ENCODE measurements at regions of chr7 and their contacts with region 1.

Region 1: DNA sequence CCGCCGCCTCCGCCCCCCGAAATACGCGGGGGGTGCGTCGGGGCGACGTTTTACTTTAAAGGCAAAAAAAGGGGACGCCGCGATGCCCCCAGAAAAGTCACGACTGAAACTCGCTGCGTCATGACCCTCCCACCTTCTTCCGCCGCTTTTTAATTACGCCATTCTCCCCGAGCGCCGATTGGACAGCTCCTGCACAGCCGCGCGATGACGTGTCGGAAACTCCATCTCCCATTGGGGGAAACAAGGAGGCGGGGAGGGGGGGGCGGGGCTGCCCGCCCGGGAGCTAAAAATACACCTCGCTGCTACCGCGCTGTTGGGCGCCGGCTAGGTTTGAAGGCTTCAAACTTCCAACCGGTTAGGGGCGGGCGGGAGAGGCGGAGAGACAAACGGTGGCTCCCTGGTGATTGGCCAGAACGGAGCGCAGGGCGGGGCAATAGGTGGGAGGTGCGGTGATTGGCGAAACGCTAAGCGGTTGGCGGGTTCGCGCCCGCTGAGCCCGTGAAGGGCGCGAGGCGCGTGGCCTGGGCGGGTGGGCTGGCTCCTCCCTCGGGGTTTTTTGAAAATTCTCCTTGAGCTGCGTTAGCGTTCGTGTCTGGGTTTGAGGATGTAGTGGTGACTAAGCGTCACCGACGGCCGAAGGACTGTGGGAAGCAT is at the start of gene RHEB:
- DNase-seq: peak; percentile 99
- ATAC-seq: peak; percentile 79 to 82
- H3K4me3 ChIP-seq: peak within 1 kb of the TSS; percentile 67 to 81 (median 72)
- H3K27ac ChIP-seq: peak within 1 kb of the TSS; percentile 85 to 98 (median 89)
- H3K4me1 ChIP-seq: peaks cover 20 to 38% of the 10 kb centered on the region in 2 donors
- H3K27me3 ChIP-seq: no peaks in the 10 kb centered on the region
- CTCF ChIP-seq: no peak
- POLR2A ChIP-seq: peak; percentile 56 to 61
- total RNA-seq, gene RHEB: 93.2 to 159 (median 124) TPM

Region 2: GRCh38 chr7:151341357-151342101 is 178.4 kb before region 1 on chr7 and contains the start of gene NUB1:
- in situ Hi-C with region 1: no loop called
- intact Hi-C with region 1: loop called (anchors 5 kb)
- DNase-seq: peak; percentile 88 to 89
- ATAC-seq: peak; percentile 96 to 97
- H3K4me3 ChIP-seq: peak within 1 kb of the TSS; percentile 72 to 77 (median 74)
- H3K27ac ChIP-seq: peak within 1 kb of the TSS; percentile 73 to 90 (median 86)
- H3K4me1 ChIP-seq: peaks cover 9 to 20% of the 10 kb centered on the region in 2 donors
- H3K27me3 ChIP-seq: no peaks in the 10 kb centered on the region
- CTCF ChIP-seq: no peak
- POLR2A ChIP-seq: peak; percentile 88 to 93
- total RNA-seq, gene NUB1: 45.3 to 59.0 (median 49.7) TPM

Region 3: DNA sequence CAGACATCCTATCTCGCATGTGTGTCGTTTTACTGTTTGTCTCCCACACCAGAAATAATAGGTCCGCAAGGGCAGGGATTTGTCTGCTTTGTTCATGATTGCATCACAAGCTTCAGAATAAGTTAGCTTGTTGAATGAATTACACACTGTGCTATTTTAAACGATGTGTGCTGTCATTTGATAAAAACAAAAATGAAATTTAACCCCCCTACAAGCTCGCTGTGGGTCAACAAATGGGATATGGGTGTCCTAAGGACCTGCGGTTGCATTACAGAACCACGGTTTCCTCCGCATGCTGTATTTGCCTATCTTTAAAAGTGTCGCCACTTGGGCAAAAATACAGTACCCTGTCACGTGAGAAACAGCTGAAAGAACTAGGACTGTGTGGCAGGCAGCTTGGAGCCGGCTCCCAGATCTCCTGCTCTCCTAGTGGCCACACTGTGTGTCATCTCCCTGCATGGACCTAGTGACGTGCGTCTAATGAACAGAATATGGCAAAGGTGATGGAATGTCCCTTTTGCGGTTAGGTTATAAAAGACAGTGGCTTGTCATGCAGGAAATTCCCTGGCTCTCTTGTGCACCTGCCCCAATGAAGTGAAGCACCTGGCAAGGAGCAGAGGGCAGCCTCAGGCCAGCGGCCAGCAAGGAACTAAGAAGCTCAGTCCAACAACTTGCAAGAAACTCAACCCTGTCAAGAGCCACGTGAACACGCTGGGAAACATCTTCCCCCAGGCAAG is 47.1 kb before region 1 on chr7:
- in situ Hi-C with region 1: loop called in 1 of 4 experiments (anchors 10 kb)
- intact Hi-C with region 1: loop called (anchors 2 kb)
- DNase-seq: peak; percentile 84 to 92
- ATAC-seq: peak; percentile 93 to 94
- H3K4me3 ChIP-seq: no peak overlapping the region
- H3K27ac ChIP-seq: peak overlapping the region; percentile 79 to 90 (median 86)
- H3K4me1 ChIP-seq: peaks cover 31 to 51% of the 10 kb centered on the region in 2 donors
- H3K27me3 ChIP-seq: no peaks in the 10 kb centered on the region
- CTCF ChIP-seq: peak in 3 of 5 experiments; percentile 24 to 58 (median 40)
- POLR2A ChIP-seq: peak in 1 of 2 donors; percentile 38

Region 4: DNA sequence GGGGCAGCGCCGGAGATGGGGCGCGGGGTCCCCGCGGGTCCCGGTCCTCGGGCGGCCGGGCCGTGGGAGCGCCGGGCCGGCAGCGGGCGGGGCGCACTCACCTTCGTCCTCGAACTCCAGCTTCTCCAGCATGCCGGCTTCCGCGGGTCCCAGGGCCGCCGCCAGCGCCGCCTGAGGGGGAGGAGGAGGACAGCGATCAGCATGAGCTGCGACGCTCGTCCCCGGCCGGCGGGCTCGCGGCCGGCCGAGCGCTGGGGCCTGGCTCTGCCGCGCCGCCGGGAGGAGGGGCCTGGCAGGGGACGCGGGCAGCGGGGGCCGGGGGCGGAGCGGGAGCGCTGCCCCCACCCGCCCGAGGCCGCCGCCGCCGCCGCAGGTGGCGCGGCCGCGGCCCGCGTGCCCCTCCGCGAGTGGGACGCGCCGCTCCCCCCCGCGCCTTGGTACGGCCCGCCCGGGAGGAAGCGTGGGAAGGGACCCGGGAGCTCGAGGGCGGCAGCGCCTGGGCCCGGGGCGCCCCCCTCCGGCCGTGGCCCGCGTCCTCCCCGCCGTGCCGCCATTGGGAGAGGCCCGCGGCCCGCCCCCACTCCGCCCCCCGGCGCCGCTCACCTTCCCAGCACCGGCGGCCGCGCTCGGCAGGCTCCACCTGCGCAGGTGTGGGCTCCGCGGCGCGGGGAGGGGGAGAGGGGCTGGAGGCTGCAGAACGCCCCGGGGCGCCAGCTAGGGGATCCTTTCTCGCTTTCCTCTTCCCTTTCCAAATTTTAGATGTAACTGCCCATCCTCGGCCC is 112.3 kb after region 1 on chr7:
- in situ Hi-C with region 1: no loop called
- intact Hi-C with region 1: loop called (anchors 5 kb)
- DNase-seq: peak; percentile 46 to 66
- ATAC-seq: peak; percentile 77 to 80
- H3K4me3 ChIP-seq: peak overlapping the region; percentile 54 to 71 (median 63)
- H3K27ac ChIP-seq: peak overlapping the region; percentile 70 to 84 (median 78)
- H3K4me1 ChIP-seq: peaks cover 8 to 13% of the 10 kb centered on the region in 2 donors
- H3K27me3 ChIP-seq: no peaks in the 10 kb centered on the region
- CTCF ChIP-seq: peak in 3 of 5 experiments; percentile 30 to 38 (median 31)
- POLR2A ChIP-seq: peak; percentile 52 to 62

Region 5: DNA sequence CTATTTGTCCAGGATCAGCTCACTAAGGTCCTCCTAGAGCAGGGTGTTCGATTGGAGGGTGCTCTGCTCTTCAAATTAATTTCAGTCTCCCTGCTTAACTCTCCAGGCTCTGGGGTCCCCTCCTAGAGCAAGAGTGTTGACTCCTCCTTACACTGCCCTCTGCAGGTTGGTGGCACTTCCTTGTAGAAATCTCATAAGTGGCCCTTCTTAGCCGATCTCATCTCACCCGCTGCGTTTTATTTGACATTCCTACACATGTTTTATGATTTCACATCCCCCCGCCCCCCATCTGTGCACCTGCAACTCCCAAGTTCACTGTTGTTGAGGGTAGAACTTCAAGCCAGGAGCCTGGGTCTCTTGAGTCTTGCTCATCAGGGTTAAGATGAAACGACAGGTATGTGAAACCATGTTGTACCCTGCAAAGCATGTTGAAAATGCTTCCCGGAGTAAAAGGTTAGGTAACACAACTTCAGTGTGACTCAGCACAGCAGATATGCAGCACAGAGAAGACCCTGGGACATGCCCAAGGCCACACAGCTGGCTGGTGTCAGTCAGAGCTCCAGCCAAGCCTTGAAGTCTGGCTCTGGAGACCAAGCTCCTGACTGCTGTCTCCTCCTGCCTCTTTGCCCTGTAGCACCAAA is 185.9 kb after region 1 on chr7:
- in situ Hi-C with region 1: no loop called
- intact Hi-C with region 1: loop called (anchors 5 kb)
- DNase-seq: peak; percentile 75 to 91
- ATAC-seq: peak; percentile 73 to 83
- H3K4me3 ChIP-seq: peak overlapping the region in 1 of 4 donors; percentile 11
- H3K27ac ChIP-seq: peak overlapping the region; percentile 57 to 73 (median 69)
- H3K4me1 ChIP-seq: peaks cover 29 to 33% of the 10 kb centered on the region in 2 donors
- H3K27me3 ChIP-seq: no peaks in the 10 kb centered on the region
- CTCF ChIP-seq: peak; percentile 38 to 60 (median 53)
- POLR2A ChIP-seq: peak in 1 of 2 donors; percentile 37